ENCODE measurements at regions of chr4 and their contacts with region 1.

Region 1: GRCh38 chr4:158671915-158672806 is at the start of gene ETFDH:
- DNase-seq: peak; percentile 97
- H3K4me3 Mint-ChIP-seq: peak within 1 kb of the TSS; percentile 96
- H3K27ac Mint-ChIP-seq: peak within 1 kb of the TSS; percentile 94
- H3K4me1 Mint-ChIP-seq: peaks cover 19% of the 10 kb centered on the region
- H3K27me3 Mint-ChIP-seq: no peaks in the 10 kb centered on the region
- total RNA-seq, gene ETFDH: 35.4 to 36.8 TPM

Region 2: DNA sequence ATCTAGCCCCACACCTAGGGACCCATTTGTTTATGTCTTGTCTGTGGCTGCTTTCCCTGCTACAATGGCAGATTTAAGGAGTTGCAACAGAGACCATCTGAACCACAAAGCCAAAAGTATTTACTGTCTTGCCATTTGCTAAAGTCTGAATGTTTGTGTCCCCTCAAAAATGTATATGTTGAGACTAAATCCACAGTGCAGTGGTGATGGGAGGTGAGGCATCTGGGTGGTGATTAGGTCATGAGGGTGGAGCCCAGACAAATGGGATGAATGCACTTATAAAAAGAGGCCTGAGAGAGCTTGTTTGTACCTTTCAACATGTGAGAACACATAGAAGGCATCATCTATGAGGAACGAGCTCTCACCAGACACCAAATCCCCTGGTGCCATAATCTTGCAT is 324.6 kb before region 1 on chr4:
- CTCF ChIA-PET with region 1: no interaction called
- intact Hi-C with region 1: no loop called
- DNase-seq: no peak
- H3K4me3 Mint-ChIP-seq: no peak overlapping the region
- H3K27ac Mint-ChIP-seq: no peak overlapping the region
- H3K4me1 Mint-ChIP-seq: no peaks in the 10 kb centered on the region
- H3K27me3 Mint-ChIP-seq: no peaks in the 10 kb centered on the region

Region 3: DNA sequence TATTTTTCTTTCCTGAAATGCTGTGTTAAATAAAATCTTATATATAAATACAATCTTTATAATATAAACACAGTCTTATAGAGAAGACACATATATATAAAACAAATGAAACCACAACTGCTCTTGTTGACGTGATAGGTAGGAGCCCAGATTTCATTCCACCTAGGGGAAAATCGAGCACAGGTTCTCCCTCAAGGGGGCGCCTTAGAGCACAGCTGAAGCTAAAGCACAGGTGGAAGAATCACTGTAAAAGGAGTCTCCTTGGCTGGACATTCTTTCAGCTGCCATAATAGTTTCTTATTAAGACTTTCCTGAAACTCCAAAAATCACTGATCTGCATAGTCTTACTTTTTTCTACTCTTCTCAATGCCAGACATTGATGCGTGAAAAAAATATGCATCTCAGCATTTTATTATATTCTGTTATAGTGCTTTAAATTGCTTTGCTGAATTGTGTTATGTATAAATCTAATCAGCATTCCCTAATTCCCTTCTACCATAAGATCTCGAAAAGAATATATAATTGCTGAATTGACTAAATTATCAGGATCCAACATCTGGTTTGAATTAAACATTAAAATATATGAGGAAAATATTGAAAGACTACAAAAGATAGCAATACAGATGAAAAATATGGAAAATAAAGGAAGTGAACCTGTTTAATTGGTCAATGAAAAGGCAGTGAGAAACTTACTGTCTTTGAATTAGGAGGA is 176.0 kb before region 1 on chr4:
- CTCF ChIA-PET with region 1: no interaction called
- intact Hi-C with region 1: loop called (anchors 2 kb)
- DNase-seq: peak; percentile 71
- H3K4me3 Mint-ChIP-seq: no peak overlapping the region
- H3K27ac Mint-ChIP-seq: no peak overlapping the region
- H3K4me1 Mint-ChIP-seq: no peaks in the 10 kb centered on the region
- H3K27me3 Mint-ChIP-seq: peaks cover 11% of the 10 kb centered on the region

Region 4: GRCh38 chr4:158624889-158625478 is 47.2 kb before region 1 on chr4:
- CTCF ChIA-PET with region 1: no interaction called
- intact Hi-C with region 1: no loop called
- DNase-seq: peak; percentile 12
- H3K4me3 Mint-ChIP-seq: no peak overlapping the region
- H3K27ac Mint-ChIP-seq: no peak overlapping the region
- H3K4me1 Mint-ChIP-seq: no peaks in the 10 kb centered on the region
- H3K27me3 Mint-ChIP-seq: peaks cover 20% of the 10 kb centered on the region

Region 5: GRCh38 chr4:158722917-158723793 is 51.0 kb after region 1 on chr4 and contains the start of gene PPID:
- CTCF ChIA-PET with region 1: interaction called, 4 read pairs
- intact Hi-C with region 1: loop called (anchors 1 kb)
- DNase-seq: peak; percentile 88
- H3K4me3 Mint-ChIP-seq: peak within 1 kb of the TSS; percentile 98
- H3K27ac Mint-ChIP-seq: peak within 1 kb of the TSS; percentile 99
- H3K4me1 Mint-ChIP-seq: peaks cover 41% of the 10 kb centered on the region
- H3K27me3 Mint-ChIP-seq: no peaks in the 10 kb centered on the region
- total RNA-seq, gene PPID: 55.4 to 55.6 TPM

Region 6: DNA sequence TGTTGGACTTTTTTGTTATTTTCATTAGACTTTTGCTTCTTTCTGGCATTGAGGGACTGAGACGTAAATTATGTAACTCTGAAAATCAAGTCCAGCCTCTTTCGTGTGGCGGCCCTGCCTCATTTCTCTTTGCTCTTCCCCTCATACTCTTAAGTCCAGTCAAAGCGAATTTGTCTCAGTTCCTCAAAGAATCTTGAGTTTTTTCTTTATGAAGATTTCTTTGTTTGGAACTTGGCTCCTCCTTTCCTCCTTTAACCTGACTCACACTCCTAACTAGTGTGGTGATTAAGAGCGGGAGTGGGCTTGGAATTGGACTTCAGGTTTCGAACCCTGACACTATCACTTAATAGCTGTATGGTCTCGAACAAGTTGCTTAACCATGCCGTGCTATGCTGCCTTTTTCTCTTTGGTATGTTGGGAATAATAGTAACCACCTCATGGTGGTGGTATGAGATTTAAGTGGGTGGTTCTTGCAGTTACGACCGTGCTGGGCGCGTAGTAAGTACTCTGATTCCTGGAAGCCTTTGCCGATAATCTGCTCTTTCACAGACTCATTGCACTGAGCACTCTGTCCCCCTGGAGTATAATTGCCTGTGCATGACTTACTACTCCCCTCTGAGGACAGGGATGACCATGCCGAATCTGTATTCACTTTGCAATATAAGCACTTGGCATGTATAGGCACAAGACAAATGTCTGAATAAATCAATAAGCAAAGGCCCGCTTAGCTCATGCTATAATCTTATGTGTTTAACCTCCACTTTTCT is 115.7 kb after region 1 on chr4:
- CTCF ChIA-PET with region 1: no interaction called
- intact Hi-C with region 1: no loop called
- DNase-seq: no peak
- H3K4me3 Mint-ChIP-seq: no peak overlapping the region
- H3K27ac Mint-ChIP-seq: no peak overlapping the region
- H3K4me1 Mint-ChIP-seq: peaks cover 4% of the 10 kb centered on the region
- H3K27me3 Mint-ChIP-seq: no peaks in the 10 kb centered on the region

Region 7: GRCh38 chr4:158809611-158810486 is 137.7 kb after region 1 on chr4:
- CTCF ChIA-PET with region 1: interaction called, 3 read pairs
- intact Hi-C with region 1: loop called (anchors 1 kb)
- DNase-seq: peak; percentile 18
- H3K4me3 Mint-ChIP-seq: peak overlapping the region; percentile 46
- H3K27ac Mint-ChIP-seq: peak overlapping the region; percentile 42
- H3K4me1 Mint-ChIP-seq: peaks cover 40% of the 10 kb centered on the region
- H3K27me3 Mint-ChIP-seq: no peaks in the 10 kb centered on the region

Region 8: DNA sequence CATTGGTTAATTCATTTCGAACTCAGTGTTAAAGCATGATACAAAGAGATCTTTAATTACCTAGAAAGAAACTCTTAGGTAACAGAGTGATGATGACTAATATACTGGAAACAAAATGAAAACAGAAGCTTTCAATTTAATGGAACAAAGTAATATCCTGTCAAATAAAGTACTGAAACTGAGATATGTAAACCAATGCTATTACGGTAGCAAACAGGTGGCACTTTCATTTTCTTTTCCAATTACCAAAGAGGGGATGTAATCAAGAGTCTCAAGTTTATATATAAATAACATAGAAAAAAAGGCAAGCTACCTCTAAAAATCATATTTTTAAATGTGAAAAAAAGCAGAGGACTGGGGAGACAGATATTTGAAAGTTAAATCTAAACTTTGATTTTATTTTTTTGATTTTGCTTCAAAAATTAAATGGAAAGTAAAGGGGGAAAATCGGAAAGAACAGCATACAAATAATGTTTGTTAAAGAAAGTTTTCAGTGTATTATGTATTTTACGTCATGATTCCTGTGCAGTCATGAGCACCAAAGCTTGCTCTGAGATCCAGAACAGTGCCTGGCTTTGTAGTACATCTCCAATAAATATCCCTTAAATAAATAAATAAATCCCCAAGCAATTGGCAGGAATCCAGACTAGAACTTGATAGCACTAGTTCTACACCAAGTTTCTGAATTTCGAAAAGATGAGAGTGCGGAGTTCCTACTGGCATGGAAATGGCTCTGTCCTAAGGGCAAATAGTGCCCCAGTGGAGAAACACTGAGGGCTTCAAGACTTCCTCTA is 405.7 kb after region 1 on chr4:
- CTCF ChIA-PET with region 1: no interaction called
- intact Hi-C with region 1: loop called (anchors 1 kb)
- DNase-seq: no peak
- H3K4me3 Mint-ChIP-seq: no peak overlapping the region
- H3K27ac Mint-ChIP-seq: peak overlapping the region; percentile 34
- H3K4me1 Mint-ChIP-seq: peaks cover 28% of the 10 kb centered on the region
- H3K27me3 Mint-ChIP-seq: no peaks in the 10 kb centered on the region

Region 9: DNA sequence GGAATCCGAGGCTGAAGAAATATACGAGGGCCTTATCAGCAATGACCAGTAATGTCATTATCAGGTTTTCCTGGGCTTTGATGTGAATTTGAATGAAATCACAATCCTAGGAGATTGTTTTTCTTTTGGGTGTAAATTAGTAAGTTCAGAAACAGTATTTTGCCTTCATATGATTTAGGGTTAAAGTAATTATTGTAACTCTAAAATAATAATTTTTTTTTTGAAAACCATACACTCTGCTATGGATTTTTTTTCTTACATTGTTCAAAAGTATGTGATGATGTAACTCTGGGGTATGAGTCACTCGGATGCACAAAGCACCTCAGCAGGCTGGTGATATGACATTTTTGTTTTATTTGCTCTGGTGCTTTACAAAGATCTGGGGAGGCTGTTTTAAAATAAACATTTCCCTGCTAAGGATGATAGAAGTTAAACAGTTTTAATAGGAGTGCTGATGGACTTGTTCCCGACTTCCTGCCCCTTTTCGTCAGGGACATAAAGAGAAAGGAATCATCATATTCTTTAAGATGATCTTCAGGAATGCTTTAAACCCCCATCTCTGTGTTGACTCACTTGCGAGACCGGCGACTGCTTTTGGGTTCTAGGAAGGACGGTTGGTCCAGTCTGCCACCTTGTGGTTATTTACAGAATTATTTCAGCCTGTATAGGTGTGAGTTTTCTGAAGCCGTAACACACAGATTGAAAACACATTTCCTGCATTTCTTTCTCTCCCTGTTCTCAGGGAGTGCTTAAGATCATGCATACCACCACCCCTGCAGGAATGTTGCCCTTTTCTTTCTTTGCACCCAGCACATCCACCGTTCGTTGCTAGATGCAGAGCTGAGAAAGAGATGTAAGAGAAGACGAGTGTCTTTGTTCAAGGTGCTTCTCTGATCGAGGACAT is 503.2 kb after region 1 on chr4:
- CTCF ChIA-PET with region 1: no interaction called
- intact Hi-C with region 1: loop called (anchors 1 kb)
- DNase-seq: peak; percentile 76
- H3K4me3 Mint-ChIP-seq: peak overlapping the region; percentile 44
- H3K27ac Mint-ChIP-seq: no peak overlapping the region
- H3K4me1 Mint-ChIP-seq: peaks cover 75% of the 10 kb centered on the region
- H3K27me3 Mint-ChIP-seq: peaks cover 3% of the 10 kb centered on the region

Measured in activated naive CD4-positive, alpha-beta T cell treated with anti-CD3 and anti-CD28 coated beads for 36 hours (primary cell).